Ovary (tissue), 10 donors: ENCODE measurements at regions of chr20 and their contacts with region 1.

Region 1: DNA sequence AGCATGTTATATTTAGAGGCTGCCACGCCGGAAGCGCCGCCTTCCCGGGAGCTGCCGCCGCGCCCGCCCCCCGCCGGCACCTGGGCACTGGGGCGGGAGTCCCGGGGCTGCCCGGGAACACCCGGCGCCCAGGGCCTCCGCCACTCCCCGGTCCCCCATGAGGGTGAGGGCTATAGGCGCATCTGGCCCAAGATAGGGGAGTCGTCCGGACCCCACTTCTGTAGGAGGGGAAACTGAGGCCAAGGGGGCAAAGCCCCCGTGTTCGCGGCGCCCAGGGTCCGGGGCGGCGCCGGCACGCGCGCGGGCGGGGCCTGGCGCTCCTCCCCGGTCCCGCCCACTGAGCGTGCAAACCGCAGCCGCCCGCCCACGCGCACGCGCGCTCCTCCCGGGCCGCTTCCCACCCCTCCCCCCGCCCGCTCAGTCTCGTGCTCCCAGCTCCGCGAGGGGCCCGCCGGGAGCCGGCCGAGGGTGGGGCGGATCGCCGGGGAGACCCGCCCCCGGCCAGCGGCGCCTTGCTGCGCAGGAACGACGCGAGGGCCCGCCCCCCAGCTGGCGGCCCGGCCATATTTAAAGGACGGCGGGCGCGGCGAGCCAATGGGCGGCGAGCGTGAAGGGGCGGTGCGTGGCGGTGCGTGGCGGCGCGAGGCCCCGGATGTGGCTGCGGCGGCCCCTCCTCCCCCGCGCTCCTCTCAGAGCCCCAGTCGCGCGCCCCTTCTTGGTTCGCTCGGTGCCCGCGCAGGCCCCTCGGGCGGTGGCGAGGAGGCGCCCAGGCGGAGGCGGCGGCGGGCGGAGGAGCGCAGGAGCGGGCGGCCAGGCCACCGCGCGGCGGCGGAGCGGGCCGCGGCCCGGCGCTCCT is at the start of gene LSM14B:
- DNase-seq: peak; percentile 96 to 98 (median 96)
- H3K4me3 ChIP-seq: peak within 1 kb of the TSS; percentile 84
- H3K27ac ChIP-seq: peak within 1 kb of the TSS; percentile 90 to 96
- H3K4me1 ChIP-seq: peaks cover 6% of the 10 kb centered on the region
- H3K27me3 ChIP-seq: no peaks in the 10 kb centered on the region
- CTCF ChIP-seq: no peak
- EP300 ChIP-seq: no peak
- POLR2A ChIP-seq: peak; percentile 45
- total RNA-seq, gene LSM14B: 21.5 to 62.2 (median 56.1) TPM

Region 2: GRCh38 chr20:61925555-61926252 is 196.3 kb before region 1 on chr20:
- intact Hi-C with region 1: no loop called
- DNase-seq: no peak
- H3K4me3 ChIP-seq: no peak overlapping the region
- H3K27ac ChIP-seq: no peak overlapping the region
- H3K4me1 ChIP-seq: no peaks in the 10 kb centered on the region
- H3K27me3 ChIP-seq: no peaks in the 10 kb centered on the region
- CTCF ChIP-seq: no peak
- EP300 ChIP-seq: no peak
- POLR2A ChIP-seq: no peak

Region 3: DNA sequence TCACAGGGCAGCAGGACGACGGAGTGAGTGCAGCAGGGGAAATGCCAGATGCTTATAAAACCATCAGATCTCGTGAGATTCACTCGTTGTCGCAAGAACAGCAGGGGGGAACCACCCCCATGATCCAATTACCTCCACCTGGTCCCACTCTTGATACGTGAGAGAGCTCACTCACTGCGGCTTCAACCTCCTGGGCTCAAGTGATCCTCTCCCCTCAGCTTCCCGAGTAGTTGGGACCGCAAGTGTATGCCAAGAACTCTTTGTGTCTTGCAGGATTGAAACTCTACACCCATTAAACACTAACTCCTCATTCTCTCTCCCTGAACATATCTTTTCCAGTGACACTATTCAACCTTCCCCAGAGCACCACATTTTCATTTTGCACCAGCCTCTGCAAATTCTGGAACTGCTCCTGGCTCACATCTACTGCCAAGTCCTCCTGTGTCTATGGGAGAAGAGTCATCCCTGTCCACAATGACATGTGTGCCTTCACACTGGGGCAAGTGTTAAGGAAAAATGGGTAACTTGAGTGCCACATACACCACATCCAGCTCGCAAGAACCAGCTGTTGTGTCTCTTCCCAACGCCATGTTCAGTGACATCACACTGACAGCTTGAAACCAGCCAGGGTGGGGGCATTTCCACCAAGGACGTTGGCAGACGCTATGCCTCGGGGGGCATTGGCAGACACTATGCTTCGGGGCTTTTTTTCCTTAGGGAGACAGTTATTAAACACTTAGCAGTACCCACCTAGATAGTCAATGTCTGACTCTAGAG is 41.6 kb before region 1 on chr20:
- intact Hi-C with region 1: loop called in 2 of 4 experiments (anchors 2 to 5 kb)
- DNase-seq: no peak
- H3K4me3 ChIP-seq: no peak overlapping the region
- H3K27ac ChIP-seq: no peak overlapping the region
- H3K4me1 ChIP-seq: no peaks in the 10 kb centered on the region
- H3K27me3 ChIP-seq: no peaks in the 10 kb centered on the region
- CTCF ChIP-seq: no peak
- EP300 ChIP-seq: no peak
- POLR2A ChIP-seq: no peak